Esophagus muscularis mucosa (tissue), 4 donors: ENCODE measurements at regions of chr2 and their contacts with region 1.

Region 1: GRCh38 chr2:97697252-97698235 is 15.8 kb upstream of the ZAP70 start:
- DNase-seq: peak; percentile 98
- H3K4me3 ChIP-seq: no peak overlapping the region
- H3K27ac ChIP-seq: no peak overlapping the region
- H3K4me1 ChIP-seq: peaks cover 0 to 5% (median 2%) of the 10 kb centered on the region in 4 donors
- H3K27me3 ChIP-seq: no peaks in the 10 kb centered on the region
- CTCF ChIP-seq: peak in 2 of 3 experiments; percentile 97 to 98
- EP300 ChIP-seq: no peak
- POLR2A ChIP-seq: no peak

Region 2: DNA sequence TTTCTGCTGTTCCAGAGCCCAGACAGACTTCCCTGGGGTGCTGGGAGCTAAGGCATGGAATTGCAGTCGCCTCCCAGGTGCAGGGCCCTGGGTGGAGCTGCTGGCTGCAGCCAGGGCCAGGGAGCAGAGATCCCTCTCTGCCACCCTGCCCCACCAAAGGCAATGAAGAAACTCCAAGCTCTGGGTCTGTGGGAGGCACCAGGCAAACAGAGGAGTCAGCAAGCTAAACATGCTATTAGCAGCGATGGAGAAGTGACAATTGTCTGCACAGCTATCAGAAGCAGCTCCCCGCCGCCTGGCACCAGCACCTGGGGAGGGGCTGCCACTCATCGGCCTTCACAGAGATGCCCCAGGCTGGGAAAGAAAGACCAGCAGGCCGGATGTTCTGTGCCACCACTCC is 79.6 kb before region 1 on chr2:
- intact Hi-C with region 1: no loop called
- DNase-seq: no peak
- H3K4me3 ChIP-seq: no peak overlapping the region
- H3K27ac ChIP-seq: no peak overlapping the region
- H3K4me1 ChIP-seq: no peaks in the 10 kb centered on the region
- H3K27me3 ChIP-seq: no peaks in the 10 kb centered on the region
- CTCF ChIP-seq: no peak
- EP300 ChIP-seq: no peak
- POLR2A ChIP-seq: no peak

Region 3: GRCh38 chr2:97645695-97646629 is 51.6 kb before region 1 on chr2 and contains the start of gene COX5B:
- intact Hi-C with region 1: loop called (anchors 10 kb)
- DNase-seq: peak; percentile 99
- H3K4me3 ChIP-seq: peak within 1 kb of the TSS; percentile 91 to 96 (median 92)
- H3K27ac ChIP-seq: peak within 1 kb of the TSS; percentile 87 to 95 (median 93)
- H3K4me1 ChIP-seq: peaks cover 13 to 27% (median 18%) of the 10 kb centered on the region in 4 donors
- H3K27me3 ChIP-seq: no peaks in the 10 kb centered on the region
- CTCF ChIP-seq: no peak
- EP300 ChIP-seq: no peak
- POLR2A ChIP-seq: peak; percentile 46
- total RNA-seq, gene COX5B: 382 to 507 (median 481) TPM

Region 4: GRCh38 chr2:97663965-97664635 is 33.4 kb before region 1 on chr2 and contains the start of gene ACTR1B:
- intact Hi-C with region 1: loop called (anchors 2 kb)
- DNase-seq: peak; percentile 99
- H3K4me3 ChIP-seq: peak within 1 kb of the TSS; percentile 67 to 85 (median 76)
- H3K27ac ChIP-seq: peak within 1 kb of the TSS; percentile 88 to 98 (median 94)
- H3K4me1 ChIP-seq: peaks cover 31 to 37% (median 35%) of the 10 kb centered on the region in 4 donors
- H3K27me3 ChIP-seq: no peaks in the 10 kb centered on the region
- CTCF ChIP-seq: peak; percentile 44 to 74 (median 68)
- EP300 ChIP-seq: no peak
- POLR2A ChIP-seq: no peak
- total RNA-seq, gene ACTR1B: 74.3 to 89.2 (median 83.9) TPM

Region 5: GRCh38 chr2:98385050-98385699 is 687.6 kb after region 1 on chr2:
- intact Hi-C with region 1: loop called (anchors 10 kb)
- DNase-seq: peak; percentile 93
- H3K4me3 ChIP-seq: no peak overlapping the region
- H3K27ac ChIP-seq: no peak overlapping the region
- H3K4me1 ChIP-seq: no peaks in the 10 kb centered on the region
- H3K27me3 ChIP-seq: no peaks in the 10 kb centered on the region
- CTCF ChIP-seq: peak; percentile 87 to 94 (median 90)
- EP300 ChIP-seq: no peak
- POLR2A ChIP-seq: no peak